ENCODE measurements at regions of chr6 and their contacts with region 1.

Region 1: DNA sequence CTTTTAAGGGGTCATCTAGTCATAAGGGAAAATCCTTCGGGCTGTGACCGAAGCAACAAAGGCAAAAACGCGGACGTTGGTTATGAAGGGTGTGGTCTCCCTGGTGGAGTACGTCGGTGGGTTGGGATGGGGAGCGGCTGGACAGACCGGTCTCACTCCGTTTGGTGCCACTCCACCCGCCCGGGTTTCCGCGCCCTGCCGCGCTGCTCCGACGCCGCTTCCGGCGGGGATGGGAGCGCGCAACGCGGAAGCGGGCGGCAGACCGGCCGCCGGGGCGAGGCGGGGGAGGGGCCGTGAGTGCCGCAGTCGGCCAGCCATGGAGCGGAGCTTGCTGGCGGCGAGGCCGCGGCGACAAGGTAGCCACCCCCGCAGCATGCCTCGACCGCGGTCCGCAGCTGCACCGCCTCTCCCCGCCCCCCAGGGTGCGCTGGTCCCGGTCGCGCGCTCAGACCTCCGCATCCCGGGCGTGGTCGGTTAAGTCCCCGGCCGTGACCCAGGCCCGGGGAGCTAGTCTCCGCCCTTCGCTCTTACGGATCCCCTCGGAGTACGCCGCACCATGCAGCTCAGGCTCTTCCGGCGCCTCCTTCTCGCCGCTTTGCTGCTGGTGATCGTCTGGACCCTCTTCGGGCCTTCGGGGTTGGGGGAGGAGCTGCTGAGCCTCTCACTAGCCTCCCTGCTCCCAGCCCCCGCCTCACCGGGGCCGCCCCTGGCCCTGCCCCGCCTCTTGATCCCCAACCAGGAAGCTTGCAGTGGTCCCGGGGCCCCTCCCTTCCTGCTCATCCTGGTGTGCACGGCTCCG is at the start of gene B3GALT4:
- DNase-seq: peak; percentile 68
- ATAC-seq: peak; percentile 65
- H3K4me3 ChIP-seq: peak within 1 kb of the TSS; percentile 46
- H3K27ac ChIP-seq: peak within 1 kb of the TSS; percentile 48
- H3K4me1 ChIP-seq: peaks cover 14% of the 10 kb centered on the region
- H3K27me3 ChIP-seq: no peaks in the 10 kb centered on the region
- CTCF ChIP-seq: peak; percentile 44
- POLR2A ChIP-seq: peak; percentile 50; the same call in 1 of the 2 replicates
- RAD21 ChIP-seq: peak; percentile 24; the same call in 1 of the 2 replicates
- total RNA-seq, gene B3GALT4: 0.72 and 0.83 TPM in 2 replicates

Region 2: DNA sequence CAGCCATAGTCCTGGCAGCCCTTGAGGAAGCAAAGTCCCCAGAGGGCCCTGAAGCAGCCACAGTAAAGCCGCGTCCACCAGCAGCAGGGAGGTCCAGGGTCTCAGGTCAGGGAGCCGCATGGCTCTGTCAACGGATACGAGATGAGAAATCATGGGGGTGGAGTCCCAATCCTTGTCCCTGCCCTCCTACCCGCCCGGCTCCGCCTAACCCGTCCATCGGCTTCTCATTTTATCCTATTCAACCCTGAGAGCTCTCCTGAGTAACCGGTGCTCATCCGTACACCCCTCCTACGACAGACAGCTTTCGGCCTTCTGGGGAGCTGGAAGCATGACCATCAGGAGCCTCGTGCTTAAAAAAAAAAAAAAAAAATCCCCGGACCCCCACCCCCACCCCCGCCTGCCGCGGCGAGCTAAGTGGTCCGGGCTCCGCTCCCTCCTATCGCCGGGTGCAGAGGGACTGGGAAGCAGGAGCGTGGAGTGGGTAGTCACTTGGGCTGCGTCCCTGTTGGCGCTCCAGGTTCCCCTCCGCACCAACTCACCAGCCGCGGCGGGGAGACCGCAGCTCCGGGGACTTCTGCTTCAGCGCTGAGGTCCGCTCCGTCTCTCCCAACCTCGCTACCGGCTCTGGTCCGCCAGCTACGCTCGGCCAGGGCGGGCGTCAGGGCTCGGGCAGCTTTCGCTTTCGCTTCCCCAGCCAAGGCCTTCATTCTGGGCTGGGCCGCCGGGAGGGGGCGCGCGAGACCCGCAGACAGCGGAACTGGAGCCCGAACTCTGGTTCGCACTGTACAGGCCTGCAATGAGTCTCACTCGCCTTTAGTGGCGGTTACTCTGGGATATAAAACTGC is 438.7 kb before region 1 on chr6 and contains the start of gene TAP2:
- CTCF ChIA-PET with region 1: no interaction called
- POLR2A ChIA-PET with region 1: no interaction called
- dilution Hi-C with region 1: no loop called
- in situ Hi-C with region 1: no loop called
- intact Hi-C with region 1: no loop called
- DNase-seq: peak; percentile 89
- ATAC-seq: peak; percentile 96
- H3K4me3 ChIP-seq: peak within 1 kb of the TSS; percentile 89
- H3K27ac ChIP-seq: peak within 1 kb of the TSS; percentile 89
- H3K4me1 ChIP-seq: peaks cover 7% of the 10 kb centered on the region
- H3K27me3 ChIP-seq: no peaks in the 10 kb centered on the region
- CTCF ChIP-seq: peak; percentile 98
- POLR2A ChIP-seq: peak; percentile 58; the same call in 1 of the 2 replicates
- RAD21 ChIP-seq: peak; percentile 91
- total RNA-seq, gene TAP2: 6.6 and 8.1 TPM in 2 replicates

Region 3: GRCh38 chr6:33288921-33289748 is 12.1 kb after region 1 on chr6 and contains the starts of genes PFDN6 and WDR46:
- CTCF ChIA-PET with region 1: no interaction called
- POLR2A ChIA-PET with region 1: interaction called, 10 read pairs
- dilution Hi-C with region 1: no loop called
- in situ Hi-C with region 1: no loop called
- intact Hi-C with region 1: no loop called
- DNase-seq: peak; percentile 88
- ATAC-seq: peak; percentile 97
- H3K4me3 ChIP-seq: peak within 1 kb of the TSS; percentile 84
- H3K27ac ChIP-seq: peak within 1 kb of the TSS; percentile 84
- H3K4me1 ChIP-seq: peaks cover 7% of the 10 kb centered on the region
- H3K27me3 ChIP-seq: no peaks in the 10 kb centered on the region
- CTCF ChIP-seq: no peak
- POLR2A ChIP-seq: 0 out of 2 replicates have a peak, but pooled peaks have one; percentile 15
- RAD21 ChIP-seq: no peak
- total RNA-seq, gene PFDN6: 24.4 and 41.7 TPM in 2 replicates
- total RNA-seq, gene WDR46: 68.9 and 73.8 TPM in 2 replicates